ENCODE measurements at regions of chr7 and their contacts with region 1.

Region 1: GRCh38 chr7:122528879-122529481 is 169.9 kb downstream of the RNF133 start:
- DNase-seq: no peak
- ATAC-seq: no peak
- H3K4me3 ChIP-seq: no peak overlapping the region
- H3K27ac ChIP-seq: no peak overlapping the region
- H3K4me1 ChIP-seq: no peaks in the 10 kb centered on the region
- H3K27me3 ChIP-seq: no peaks in the 10 kb centered on the region
- CTCF ChIP-seq: peak; percentile 50 to 78 (median 63)

Region 2: DNA sequence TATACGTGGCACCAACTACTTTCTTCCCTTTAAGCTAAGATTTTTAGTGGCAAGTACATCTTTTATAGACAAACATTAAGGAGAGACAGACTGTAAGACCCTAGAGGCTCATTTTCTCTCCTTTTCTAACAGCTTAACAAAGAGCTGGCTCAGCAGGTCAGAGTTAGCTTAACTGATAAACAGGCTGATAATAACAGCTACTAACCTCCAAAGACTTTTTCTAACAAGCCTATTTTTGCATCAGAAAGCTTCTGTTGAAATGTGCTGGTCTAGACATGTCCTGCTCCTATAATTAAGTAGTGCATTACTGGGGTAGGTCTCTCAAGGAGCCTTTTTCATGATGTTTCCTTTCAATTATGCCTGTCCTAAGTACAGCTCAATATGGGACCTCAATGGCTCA is 894.6 kb before region 1 on chr7:
- intact Hi-C with region 1: no loop called
- DNase-seq: no peak
- ATAC-seq: no peak
- H3K4me3 ChIP-seq: no peak overlapping the region
- H3K27ac ChIP-seq: no peak overlapping the region
- H3K4me1 ChIP-seq: no peaks in the 10 kb centered on the region
- H3K27me3 ChIP-seq: no peaks in the 10 kb centered on the region
- CTCF ChIP-seq: no peak

Region 3: GRCh38 chr7:122092964-122093797 is 435.8 kb before region 1 on chr7:
- intact Hi-C with region 1: loop called in 6 of 10 experiments (anchors 2 to 10 kb)
- DNase-seq: peak; percentile 9 to 40
- ATAC-seq: no peak
- H3K4me3 ChIP-seq: no peak overlapping the region
- H3K27ac ChIP-seq: no peak overlapping the region
- H3K4me1 ChIP-seq: no peaks in the 10 kb centered on the region
- H3K27me3 ChIP-seq: no peaks in the 10 kb centered on the region
- CTCF ChIP-seq: peak; percentile 57 to 90 (median 86)

Region 4: GRCh38 chr7:122219253-122219865 is 309.6 kb before region 1 on chr7:
- intact Hi-C with region 1: loop called in 9 of 10 experiments (anchors 2 to 10 kb)
- DNase-seq: no peak
- ATAC-seq: no peak
- H3K4me3 ChIP-seq: no peak overlapping the region
- H3K27ac ChIP-seq: no peak overlapping the region
- H3K4me1 ChIP-seq: no peaks in the 10 kb centered on the region
- H3K27me3 ChIP-seq: no peaks in the 10 kb centered on the region
- CTCF ChIP-seq: peak; percentile 23 to 74 (median 59)

Region 5: DNA sequence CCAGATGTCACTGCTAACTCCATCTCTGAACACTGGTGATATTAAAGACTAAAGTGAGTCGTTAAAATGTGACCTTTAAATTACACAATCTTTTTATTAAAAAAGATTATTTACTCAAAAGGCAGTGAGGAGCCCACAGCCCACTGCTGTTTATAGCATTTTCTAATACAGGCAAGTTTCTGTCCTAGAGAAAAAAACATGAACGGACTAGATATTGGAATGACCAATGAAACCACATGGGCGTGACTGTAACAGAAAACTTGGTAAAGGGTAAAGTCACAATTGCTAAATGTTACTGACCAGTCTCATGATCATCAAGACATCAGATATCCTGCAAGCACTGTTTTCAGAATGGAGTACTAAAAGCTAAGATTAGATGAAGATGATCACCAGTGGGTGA is 303.1 kb before region 1 on chr7:
- intact Hi-C with region 1: loop called in 2 of 10 experiments (anchors 10 kb)
- DNase-seq: no peak
- ATAC-seq: no peak
- H3K4me3 ChIP-seq: no peak overlapping the region
- H3K27ac ChIP-seq: no peak overlapping the region
- H3K4me1 ChIP-seq: no peaks in the 10 kb centered on the region
- H3K27me3 ChIP-seq: peaks cover 0 to 6% (median 0%) of the 10 kb centered on the region in 7 donors
- CTCF ChIP-seq: no peak